Activated CD4-positive, alpha-beta memory T cell treated with anti-CD3 and anti-CD28 coated beads, Interleukin-2, amount 10 ng/mL, durations not matched to agents 7 days and 5 days (primary cell): ENCODE measurements at regions of chr4 and their contacts with region 1.

Region 1: DNA sequence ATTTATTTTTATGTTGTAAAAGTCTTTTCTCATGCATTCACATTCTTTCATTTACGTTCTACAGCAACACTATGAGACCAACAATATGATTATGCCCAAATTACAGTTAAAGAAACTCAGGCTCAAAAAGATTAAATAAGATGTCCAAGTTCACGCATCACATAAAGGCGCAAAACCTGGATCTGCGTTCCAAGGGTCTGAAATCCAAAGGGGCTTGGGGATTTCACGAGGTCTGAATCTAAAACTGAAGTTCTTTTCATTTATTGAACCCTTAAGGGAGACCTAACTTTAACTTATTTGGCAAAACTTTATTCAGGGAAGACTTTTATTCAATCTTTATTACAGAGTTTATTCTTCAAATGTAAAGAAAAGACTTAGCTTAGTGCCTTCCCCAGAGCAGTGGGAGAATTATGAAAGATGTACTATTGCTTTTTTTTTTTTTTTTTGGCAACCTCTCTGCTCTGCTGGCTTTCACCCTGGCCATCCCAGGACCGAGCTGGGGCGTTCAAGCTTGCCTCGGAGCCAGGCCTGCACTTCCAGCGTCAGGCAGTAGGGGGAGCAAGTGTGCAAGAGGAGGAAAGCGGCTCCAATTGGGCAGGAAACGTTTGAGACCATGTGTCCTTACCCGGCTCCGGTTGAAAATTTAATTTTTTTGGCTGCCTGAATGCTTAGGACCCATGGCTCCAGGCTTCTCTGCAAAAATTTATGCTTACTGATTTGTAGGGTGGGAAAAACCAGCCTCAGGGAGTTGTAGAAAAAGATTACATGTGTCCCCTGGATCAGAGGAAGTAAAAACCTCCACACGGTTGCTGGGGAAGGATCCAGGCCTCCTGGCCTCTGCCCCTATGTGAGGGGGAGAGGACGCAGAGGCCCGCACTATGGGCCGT is 344.3 kb upstream of the KLF3 start:
- DNase-seq: peak; percentile 92
- H3K4me3 Mint-ChIP-seq: peak overlapping the region; percentile 76
- H3K27ac Mint-ChIP-seq: peak overlapping the region; percentile 92
- H3K4me1 Mint-ChIP-seq: peaks cover 34% of the 10 kb centered on the region
- H3K27me3 Mint-ChIP-seq: peaks cover 18% of the 10 kb centered on the region

Region 2: GRCh38 chr4:38302910-38303309 is 16.8 kb before region 1 on chr4:
- CTCF ChIA-PET with region 1: interaction called, 63 read pairs
- POLR2A ChIA-PET with region 1: interaction called, 5 read pairs
- DNase-seq: no peak
- H3K4me3 Mint-ChIP-seq: no peak overlapping the region
- H3K27ac Mint-ChIP-seq: no peak overlapping the region
- H3K4me1 Mint-ChIP-seq: peaks cover 24% of the 10 kb centered on the region
- H3K27me3 Mint-ChIP-seq: peaks cover 25% of the 10 kb centered on the region

Region 3: DNA sequence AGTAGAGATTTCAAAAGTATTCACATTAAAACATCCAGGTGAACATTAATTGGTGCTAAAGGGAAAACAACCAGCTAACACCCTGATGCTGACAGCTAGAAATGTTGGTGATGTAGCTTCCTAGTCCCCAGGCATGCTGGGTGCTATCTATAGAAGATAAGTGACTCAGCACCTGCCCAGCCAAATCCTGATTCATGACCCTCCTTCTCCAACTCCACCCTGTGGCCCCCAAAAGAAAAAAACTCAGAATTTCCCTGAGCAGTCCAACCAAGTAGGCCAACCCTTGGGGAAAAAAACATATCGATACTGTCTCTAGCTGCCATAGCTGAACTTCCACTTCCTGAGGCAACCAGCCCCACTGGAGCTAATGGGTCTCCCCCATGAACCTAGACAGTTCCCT is 146.7 kb after region 1 on chr4:
- CTCF ChIA-PET with region 1: no interaction called
- POLR2A ChIA-PET with region 1: no interaction called
- DNase-seq: no peak
- H3K4me3 Mint-ChIP-seq: no peak overlapping the region
- H3K27ac Mint-ChIP-seq: no peak overlapping the region
- H3K4me1 Mint-ChIP-seq: peaks cover 5% of the 10 kb centered on the region
- H3K27me3 Mint-ChIP-seq: no peaks in the 10 kb centered on the region

Region 4: DNA sequence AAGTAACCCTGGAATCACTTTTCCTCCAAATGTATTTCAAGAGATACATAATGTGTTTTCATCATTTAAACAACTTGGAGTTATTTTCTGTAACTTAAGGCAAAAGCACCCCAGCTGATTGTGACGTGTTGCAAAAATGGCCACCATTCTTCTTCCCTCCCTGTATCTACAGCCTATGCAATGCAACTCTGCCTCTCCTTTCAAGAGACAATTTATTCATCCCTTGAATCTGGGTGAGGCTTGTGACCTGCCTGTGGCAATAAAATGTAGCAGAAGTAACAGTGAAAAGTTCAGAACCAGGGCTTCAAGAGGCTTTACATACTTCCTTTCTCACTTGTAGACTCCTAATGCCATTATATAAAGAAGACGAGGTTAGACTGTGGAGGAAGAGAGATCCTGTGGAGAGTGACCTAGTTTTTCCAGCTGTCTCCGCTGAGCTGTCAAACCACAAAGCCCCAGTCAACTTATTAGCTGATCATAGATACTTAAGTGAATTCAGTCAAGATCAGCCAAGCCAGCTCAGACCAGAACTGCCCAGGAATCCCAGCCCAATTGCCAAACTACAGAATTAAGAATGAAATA is 263.3 kb after region 1 on chr4:
- CTCF ChIA-PET with region 1: interaction called, 10 read pairs
- POLR2A ChIA-PET with region 1: no interaction called
- DNase-seq: no peak
- H3K4me3 Mint-ChIP-seq: no peak overlapping the region
- H3K27ac Mint-ChIP-seq: no peak overlapping the region
- H3K4me1 Mint-ChIP-seq: peaks cover 5% of the 10 kb centered on the region
- H3K27me3 Mint-ChIP-seq: peaks cover 10% of the 10 kb centered on the region

Region 5: DNA sequence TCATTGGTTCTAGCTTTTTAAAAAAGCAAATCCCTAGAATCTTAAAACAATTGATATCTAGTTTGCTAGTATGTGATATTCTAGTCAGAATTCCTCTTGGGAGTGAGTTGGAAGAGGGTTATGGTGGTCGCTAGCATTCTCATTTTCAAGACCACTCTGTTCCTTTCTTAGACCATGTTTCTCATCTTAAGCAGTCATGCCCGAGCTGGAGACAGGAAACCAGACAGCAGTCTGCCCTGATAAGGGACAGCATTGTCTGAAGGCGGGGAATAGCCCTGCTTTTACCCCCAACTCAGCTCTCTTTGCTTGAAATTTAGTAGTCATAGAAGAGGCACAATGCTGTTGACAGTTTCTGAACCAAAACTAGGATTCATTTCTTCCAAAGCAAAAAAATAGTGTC is 349.5 kb after region 1 on chr4:
- CTCF ChIA-PET with region 1: interaction called, 77 read pairs
- POLR2A ChIA-PET with region 1: interaction called, 19 read pairs
- DNase-seq: no peak
- H3K4me3 Mint-ChIP-seq: no peak overlapping the region
- H3K27ac Mint-ChIP-seq: no peak overlapping the region
- H3K4me1 Mint-ChIP-seq: peaks cover 82% of the 10 kb centered on the region
- H3K27me3 Mint-ChIP-seq: peaks cover 32% of the 10 kb centered on the region

Region 6: GRCh38 chr4:38730830-38731646 is 411.3 kb after region 1 on chr4:
- CTCF ChIA-PET with region 1: interaction called, 10 read pairs
- POLR2A ChIA-PET with region 1: interaction called, 5 read pairs
- DNase-seq: peak; percentile 80
- H3K4me3 Mint-ChIP-seq: no peak overlapping the region
- H3K27ac Mint-ChIP-seq: no peak overlapping the region
- H3K4me1 Mint-ChIP-seq: peaks cover 19% of the 10 kb centered on the region
- H3K27me3 Mint-ChIP-seq: peaks cover 23% of the 10 kb centered on the region